ENCODE measurements at regions of chr3 and their contacts with region 1.

Region 1: GRCh38 chr3:111936191-111936841 is 42.5 kb upstream of the ABHD10 start:
- DNase-seq: peak; percentile 84
- H3K4me3 ChIP-seq: peak overlapping the region in 2 of 3 experiments; percentile 15 to 28
- H3K27ac ChIP-seq: peak overlapping the region; percentile 99
- H3K4me1 ChIP-seq: peaks cover 70% of the 10 kb centered on the region
- H3K27me3 ChIP-seq: no peaks in the 10 kb centered on the region
- CTCF ChIP-seq: no peak
- POLR2A ChIP-seq: no peak

Region 2: DNA sequence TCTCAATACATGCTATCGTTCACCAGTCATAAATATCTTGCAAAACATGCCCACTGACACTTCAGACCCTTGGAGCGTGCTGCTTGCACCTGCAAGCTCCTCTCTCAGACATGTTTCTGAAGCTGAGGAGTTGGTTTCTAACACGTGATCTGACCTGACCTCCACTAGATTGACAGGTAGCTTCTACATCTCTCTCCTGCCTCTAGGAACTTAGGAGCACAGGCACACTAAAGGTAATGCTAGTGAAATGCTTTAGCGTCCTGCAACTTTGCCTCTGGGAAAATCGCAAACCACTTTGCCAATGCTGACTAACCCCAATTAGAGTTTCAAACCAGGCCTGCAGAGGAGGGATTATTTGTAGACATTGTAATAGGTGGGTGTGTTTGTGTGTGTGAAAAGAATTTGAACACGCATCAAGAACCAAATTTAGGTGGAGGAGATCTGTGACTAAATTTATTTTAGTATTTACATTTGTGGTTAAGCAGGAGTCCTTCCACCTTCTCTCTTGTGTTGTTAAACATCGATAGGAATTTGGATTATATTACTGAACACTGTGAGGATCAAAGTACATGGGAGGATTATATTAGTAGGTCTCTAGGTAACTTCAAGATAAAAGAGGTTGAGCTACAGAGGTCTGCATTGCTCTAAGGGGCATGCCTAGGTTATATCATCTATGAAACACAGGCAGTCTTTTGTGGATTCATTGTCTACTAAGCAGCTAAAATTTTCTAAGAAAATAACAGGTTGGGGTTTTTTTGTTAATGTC is 254.5 kb before region 1 on chr3:
- CTCF ChIA-PET with region 1: no interaction called
- POLR2A ChIA-PET with region 1: no interaction called
- dilution Hi-C with region 1: no loop called
- intact Hi-C with region 1: no loop called
- DNase-seq: no peak
- H3K4me3 ChIP-seq: no peak overlapping the region
- H3K27ac ChIP-seq: no peak overlapping the region
- H3K4me1 ChIP-seq: peaks cover 5% of the 10 kb centered on the region
- H3K27me3 ChIP-seq: no peaks in the 10 kb centered on the region
- CTCF ChIP-seq: no peak
- POLR2A ChIP-seq: no peak

Region 3: DNA sequence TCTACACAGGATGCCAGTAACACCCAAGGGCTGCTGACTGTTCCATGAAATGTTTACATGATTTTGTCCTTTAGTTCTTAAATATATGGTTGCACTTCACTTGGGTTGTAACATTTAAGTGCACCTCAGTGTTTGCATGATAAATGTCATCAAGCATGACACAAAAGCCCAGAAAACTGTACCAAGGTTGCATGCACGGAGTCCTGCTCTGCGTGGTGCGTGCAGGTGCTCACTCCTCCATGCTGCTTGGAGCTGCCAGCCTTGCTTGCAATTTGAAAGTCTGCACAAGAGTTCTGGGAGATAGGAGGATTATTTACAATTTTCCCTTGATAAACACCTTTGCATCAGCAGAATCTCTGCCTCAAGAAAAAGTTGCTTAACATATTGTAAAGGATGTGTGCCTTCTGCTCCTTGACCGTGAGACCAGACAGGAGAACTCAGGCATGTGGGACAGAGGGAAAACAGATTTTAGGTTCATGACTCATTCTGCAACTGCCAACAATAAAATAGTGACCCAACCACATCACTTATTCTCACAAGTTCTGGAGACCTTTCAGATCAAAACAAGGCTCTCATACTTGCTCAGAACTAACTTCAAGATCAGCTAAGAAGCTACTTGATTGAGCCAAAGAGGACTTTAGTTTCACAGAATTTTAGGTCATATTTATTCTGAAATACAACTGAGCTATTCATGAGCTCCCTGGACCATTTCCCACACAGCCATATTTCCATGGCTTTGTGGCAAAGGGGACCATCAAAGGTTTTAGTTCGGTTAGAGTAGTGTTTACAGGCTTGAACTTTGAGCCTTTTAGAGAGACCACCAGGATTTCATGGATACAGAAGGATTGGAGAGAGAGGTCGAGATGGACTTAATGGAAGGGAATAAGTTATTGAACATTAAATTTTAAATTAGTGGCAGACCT is 212.8 kb before region 1 on chr3:
- CTCF ChIA-PET with region 1: no interaction called
- POLR2A ChIA-PET with region 1: no interaction called
- dilution Hi-C with region 1: no loop called
- intact Hi-C with region 1: no loop called
- DNase-seq: peak; percentile 56
- H3K4me3 ChIP-seq: no peak overlapping the region
- H3K27ac ChIP-seq: no peak overlapping the region
- H3K4me1 ChIP-seq: no peaks in the 10 kb centered on the region
- H3K27me3 ChIP-seq: no peaks in the 10 kb centered on the region
- CTCF ChIP-seq: no peak
- POLR2A ChIP-seq: no peak

Region 4: GRCh38 chr3:111904376-111905241 is 31.7 kb before region 1 on chr3:
- CTCF ChIA-PET with region 1: interaction called, 4 read pairs
- POLR2A ChIA-PET with region 1: no interaction called
- dilution Hi-C with region 1: no loop called
- intact Hi-C with region 1: loop called (anchors 2 kb)
- DNase-seq: peak; percentile 53
- H3K4me3 ChIP-seq: no peak overlapping the region
- H3K27ac ChIP-seq: peak overlapping the region; percentile 54
- H3K4me1 ChIP-seq: peaks cover 31% of the 10 kb centered on the region
- H3K27me3 ChIP-seq: no peaks in the 10 kb centered on the region
- CTCF ChIP-seq: no peak
- POLR2A ChIP-seq: no peak

Region 5: GRCh38 chr3:111917300-111917699 is 19.0 kb before region 1 on chr3:
- CTCF ChIA-PET with region 1: interaction called, 11 read pairs
- POLR2A ChIA-PET with region 1: no interaction called
- dilution Hi-C with region 1: no loop called
- intact Hi-C with region 1: loop called (anchors 1 kb)
- DNase-seq: peak; percentile 88
- H3K4me3 ChIP-seq: peak overlapping the region in 1 of 3 experiments; percentile 17
- H3K27ac ChIP-seq: peak overlapping the region; percentile 91
- H3K4me1 ChIP-seq: peaks cover 35% of the 10 kb centered on the region
- H3K27me3 ChIP-seq: no peaks in the 10 kb centered on the region
- CTCF ChIP-seq: no peak
- POLR2A ChIP-seq: peak; percentile 25

Region 6: GRCh38 chr3:111924283-111924682 is 12.0 kb before region 1 on chr3:
- CTCF ChIA-PET with region 1: interaction called, 11 read pairs
- POLR2A ChIA-PET with region 1: interaction called, 4 read pairs
- dilution Hi-C with region 1: no loop called
- intact Hi-C with region 1: loop called (anchors 1 kb)
- DNase-seq: peak; percentile 99
- H3K4me3 ChIP-seq: no peak overlapping the region
- H3K27ac ChIP-seq: peak overlapping the region; percentile 69
- H3K4me1 ChIP-seq: peaks cover 29% of the 10 kb centered on the region
- H3K27me3 ChIP-seq: no peaks in the 10 kb centered on the region
- CTCF ChIP-seq: no peak
- POLR2A ChIP-seq: no peak

Region 7: GRCh38 chr3:111947231-111947630 is 10.9 kb after region 1 on chr3:
- CTCF ChIA-PET with region 1: interaction called, 4 read pairs
- POLR2A ChIA-PET with region 1: no interaction called
- dilution Hi-C with region 1: no loop called
- intact Hi-C with region 1: loop called (anchors 1 kb)
- DNase-seq: peak; percentile 89
- H3K4me3 ChIP-seq: no peak overlapping the region
- H3K27ac ChIP-seq: peak overlapping the region; percentile 79
- H3K4me1 ChIP-seq: peaks cover 24% of the 10 kb centered on the region
- H3K27me3 ChIP-seq: no peaks in the 10 kb centered on the region
- CTCF ChIP-seq: no peak
- POLR2A ChIP-seq: no peak

Region 8: DNA sequence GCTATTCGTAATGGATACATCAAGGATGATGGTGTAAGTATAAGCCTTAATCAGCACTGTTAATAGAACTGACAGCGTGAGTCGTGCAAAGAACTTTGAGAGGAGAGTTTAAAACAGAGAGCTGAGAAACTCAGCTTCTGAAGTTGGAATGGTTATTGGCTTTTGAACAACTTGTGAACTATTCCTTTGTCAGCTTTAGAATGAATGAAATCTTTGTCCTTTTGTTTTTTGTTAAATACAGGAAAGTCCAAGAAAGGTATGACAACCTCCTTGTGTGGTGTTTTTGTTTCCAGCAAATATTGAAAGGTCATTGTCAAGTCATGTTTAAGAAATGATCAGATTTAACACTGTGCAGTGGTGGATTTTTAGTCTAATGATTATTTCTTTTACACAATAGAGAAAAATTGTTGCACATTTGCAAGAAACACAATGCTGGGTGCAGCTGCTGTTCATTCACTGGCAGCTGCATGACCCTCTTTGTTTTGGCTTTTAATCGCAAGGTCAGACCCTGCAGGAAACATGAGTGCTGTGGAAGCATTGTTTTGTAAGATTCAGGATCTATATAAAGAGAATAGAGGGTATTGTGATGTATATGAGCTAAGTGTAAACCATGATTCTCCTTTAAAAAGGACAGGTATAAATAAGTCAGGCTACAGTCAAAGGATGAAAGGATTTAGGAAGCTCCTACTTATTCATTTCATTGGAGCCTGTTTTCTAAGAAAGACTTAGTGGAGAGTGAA is 20.8 kb after region 1 on chr3:
- CTCF ChIA-PET with region 1: interaction called, 9 read pairs
- POLR2A ChIA-PET with region 1: interaction called, 8 read pairs
- dilution Hi-C with region 1: no loop called
- intact Hi-C with region 1: loop called (anchors 1 kb)
- DNase-seq: peak; percentile 91
- H3K4me3 ChIP-seq: no peak overlapping the region
- H3K27ac ChIP-seq: peak overlapping the region; percentile 57
- H3K4me1 ChIP-seq: peaks cover 28% of the 10 kb centered on the region
- H3K27me3 ChIP-seq: no peaks in the 10 kb centered on the region
- CTCF ChIP-seq: no peak
- POLR2A ChIP-seq: no peak

Region 9: DNA sequence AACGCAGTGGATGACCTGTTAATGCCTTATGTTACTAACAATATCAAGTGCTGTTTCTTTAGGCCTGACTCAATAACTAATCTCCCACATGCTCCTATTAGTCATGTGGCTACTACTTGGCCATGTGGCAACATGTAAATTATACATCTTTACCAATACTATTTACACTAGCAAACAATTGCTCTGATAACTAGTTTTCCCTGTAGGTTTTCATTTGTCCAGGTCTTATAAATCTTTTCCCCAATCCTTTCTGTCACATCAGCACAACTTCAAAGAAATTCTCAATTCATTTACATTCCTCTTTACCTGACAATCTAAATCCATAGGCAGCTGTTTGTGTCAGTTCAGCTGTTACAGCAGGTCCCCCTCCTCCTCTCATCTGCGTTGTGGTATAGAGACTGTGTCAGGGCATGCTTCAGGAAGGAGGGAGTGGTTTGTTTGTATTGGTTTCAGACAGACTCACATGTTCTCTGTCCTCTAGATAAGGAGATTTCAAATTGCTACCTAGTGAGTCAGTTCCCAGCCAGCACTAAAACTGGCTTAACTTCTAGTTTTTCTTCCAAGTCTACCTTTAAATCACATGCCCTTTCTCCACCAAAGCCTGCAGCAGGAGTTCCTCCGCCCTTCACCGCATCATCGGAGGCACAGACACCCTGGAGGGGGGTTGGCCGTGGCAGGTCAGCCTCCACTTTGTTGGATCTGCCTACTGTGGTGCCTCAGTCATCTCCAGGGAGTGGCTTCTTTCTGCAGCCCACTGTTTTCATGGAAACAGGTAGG is 138.6 kb after region 1 on chr3:
- CTCF ChIA-PET with region 1: no interaction called
- POLR2A ChIA-PET with region 1: no interaction called
- dilution Hi-C with region 1: no loop called
- intact Hi-C with region 1: no loop called
- DNase-seq: peak; percentile 91
- H3K4me3 ChIP-seq: no peak overlapping the region
- H3K27ac ChIP-seq: peak overlapping the region; percentile 68
- H3K4me1 ChIP-seq: peaks cover 17% of the 10 kb centered on the region
- H3K27me3 ChIP-seq: no peaks in the 10 kb centered on the region
- CTCF ChIP-seq: no peak
- POLR2A ChIP-seq: peak; percentile 17

Region 10: DNA sequence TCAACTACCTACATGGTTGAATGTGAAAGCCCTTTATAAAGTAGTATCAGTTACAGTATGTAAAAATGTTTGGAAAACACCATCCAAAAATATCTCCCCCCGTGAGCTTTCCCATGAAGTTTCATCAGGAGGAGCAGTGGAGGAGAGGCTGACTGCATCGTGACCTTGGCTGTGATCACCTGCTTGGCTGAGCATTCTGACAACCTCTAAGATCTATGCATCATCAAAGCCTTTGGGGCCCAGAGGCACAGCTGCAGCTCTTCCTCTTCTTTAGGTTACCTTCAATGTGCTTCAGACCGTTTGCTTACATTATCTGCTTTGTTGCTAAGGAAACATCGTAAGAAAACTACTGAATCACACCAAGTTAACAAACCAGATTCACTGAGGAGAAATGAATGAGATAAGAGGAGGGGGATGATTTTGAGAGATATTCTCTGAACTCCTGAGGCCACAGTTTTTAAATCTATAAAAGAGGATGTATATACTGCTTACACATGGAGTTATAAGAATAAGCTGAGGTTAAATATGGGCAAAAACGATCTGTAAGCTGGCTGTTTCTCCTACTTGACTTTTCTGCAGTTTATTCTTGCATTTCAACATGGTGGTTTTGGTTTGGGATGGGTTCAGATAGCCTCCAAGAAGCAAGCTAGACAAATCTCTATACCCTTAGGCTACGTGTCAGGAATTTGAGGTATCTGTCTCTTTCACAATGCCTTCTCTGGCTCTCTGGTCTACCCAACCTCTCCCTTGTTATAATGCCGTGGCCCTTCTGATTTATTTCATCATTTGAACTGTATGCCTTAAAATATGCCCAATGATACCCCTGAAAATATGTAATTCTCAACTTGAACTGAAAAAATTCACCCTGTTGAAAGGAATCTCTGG is 192.8 kb after region 1 on chr3:
- CTCF ChIA-PET with region 1: no interaction called
- POLR2A ChIA-PET with region 1: no interaction called
- dilution Hi-C with region 1: no loop called
- intact Hi-C with region 1: no loop called
- DNase-seq: no peak
- H3K4me3 ChIP-seq: no peak overlapping the region
- H3K27ac ChIP-seq: no peak overlapping the region
- H3K4me1 ChIP-seq: no peaks in the 10 kb centered on the region
- H3K27me3 ChIP-seq: no peaks in the 10 kb centered on the region
- CTCF ChIP-seq: no peak
- POLR2A ChIP-seq: no peak

Measured in endothelial cell of umbilical vein (primary cell).